ENCODE measurements at regions of chr14 and their contacts with region 1.

Region 1: DNA sequence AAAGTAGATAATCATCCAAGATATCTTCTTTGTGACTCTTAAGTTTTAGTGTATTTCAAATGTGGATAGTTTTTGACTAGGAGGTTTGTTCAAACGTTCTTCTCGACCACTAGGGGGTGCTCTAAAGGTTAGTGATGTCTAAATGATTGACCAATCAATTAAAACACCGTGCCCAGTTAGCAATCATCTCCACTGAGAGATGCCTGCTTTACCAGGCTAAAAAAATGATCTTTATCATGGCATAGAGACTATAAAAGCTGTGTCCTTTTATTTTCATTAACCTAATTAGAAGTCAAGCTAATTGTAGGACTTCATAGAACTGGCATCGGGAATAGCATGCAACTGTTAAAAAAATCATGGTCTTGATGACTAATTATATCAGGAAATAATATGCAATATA is 153.9 kb downstream of the PRKCH start:
- DNase-seq: no peak
- H3K4me3 Mint-ChIP-seq: peak overlapping the region; percentile 42
- H3K27ac Mint-ChIP-seq: peak overlapping the region; percentile 100
- H3K4me1 Mint-ChIP-seq: peaks cover 93% of the 10 kb centered on the region
- H3K27me3 Mint-ChIP-seq: peaks cover 1% of the 10 kb centered on the region

Region 2: GRCh38 chr14:61461808-61462275 is 13.5 kb before region 1 on chr14:
- CTCF ChIA-PET with region 1: interaction called, 17 read pairs
- POLR2A ChIA-PET with region 1: no interaction called
- intact Hi-C with region 1: no loop called
- DNase-seq: no peak
- H3K4me3 Mint-ChIP-seq: no peak overlapping the region
- H3K27ac Mint-ChIP-seq: peak overlapping the region; percentile 90
- H3K4me1 Mint-ChIP-seq: peaks cover 63% of the 10 kb centered on the region
- H3K27me3 Mint-ChIP-seq: no peaks in the 10 kb centered on the region

Region 3: GRCh38 chr14:61503167-61503801 is 28.0 kb after region 1 on chr14:
- CTCF ChIA-PET with region 1: interaction called, 32 read pairs
- POLR2A ChIA-PET with region 1: interaction called, 74 read pairs
- intact Hi-C with region 1: loop called (anchors 1 kb)
- DNase-seq: peak; percentile 90
- H3K4me3 Mint-ChIP-seq: peak overlapping the region; percentile 62
- H3K27ac Mint-ChIP-seq: peak overlapping the region; percentile 98
- H3K4me1 Mint-ChIP-seq: peaks cover 98% of the 10 kb centered on the region
- H3K27me3 Mint-ChIP-seq: no peaks in the 10 kb centered on the region

Region 4: DNA sequence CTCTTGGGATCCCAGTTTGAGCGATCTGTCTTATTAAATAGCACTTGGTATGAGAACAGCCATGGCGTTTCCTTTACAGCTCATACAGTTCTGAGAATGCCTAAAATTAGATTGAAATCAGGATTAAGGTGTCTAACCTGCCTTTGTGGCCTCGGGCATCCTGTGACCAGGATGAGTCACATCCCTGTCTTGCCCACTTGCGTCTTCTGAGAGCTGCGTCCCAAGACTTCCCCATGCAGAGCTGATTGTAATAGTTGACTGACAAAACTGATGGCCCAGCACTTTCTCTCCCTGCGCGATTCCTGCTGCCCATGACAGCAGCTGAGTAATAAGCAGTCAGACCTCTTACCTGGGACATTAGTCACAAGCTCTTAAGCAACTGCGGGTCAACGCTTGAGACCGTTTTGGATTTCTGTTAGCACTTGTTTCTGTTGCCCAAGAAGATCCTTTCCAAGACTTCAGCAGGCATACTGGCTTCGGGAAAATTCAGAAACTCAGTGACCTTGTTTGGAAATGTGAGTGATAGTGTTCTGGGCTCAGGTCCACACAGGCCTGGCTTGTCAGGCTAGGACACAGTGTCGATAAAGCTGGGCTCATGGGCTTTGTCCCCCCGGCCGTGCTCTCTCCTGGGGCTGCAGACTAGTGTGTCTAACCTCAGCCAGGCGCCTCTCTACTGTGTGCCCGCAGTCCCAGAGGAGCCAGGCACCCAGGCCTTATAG is 50.1 kb after region 1 on chr14:
- CTCF ChIA-PET with region 1: interaction called, 13 read pairs
- POLR2A ChIA-PET with region 1: interaction called, 42 read pairs
- intact Hi-C with region 1: loop called (anchors 1 kb)
- DNase-seq: peak; percentile 92
- H3K4me3 Mint-ChIP-seq: peak overlapping the region; percentile 63
- H3K27ac Mint-ChIP-seq: peak overlapping the region; percentile 91
- H3K4me1 Mint-ChIP-seq: peaks cover 88% of the 10 kb centered on the region
- H3K27me3 Mint-ChIP-seq: no peaks in the 10 kb centered on the region

Region 5: DNA sequence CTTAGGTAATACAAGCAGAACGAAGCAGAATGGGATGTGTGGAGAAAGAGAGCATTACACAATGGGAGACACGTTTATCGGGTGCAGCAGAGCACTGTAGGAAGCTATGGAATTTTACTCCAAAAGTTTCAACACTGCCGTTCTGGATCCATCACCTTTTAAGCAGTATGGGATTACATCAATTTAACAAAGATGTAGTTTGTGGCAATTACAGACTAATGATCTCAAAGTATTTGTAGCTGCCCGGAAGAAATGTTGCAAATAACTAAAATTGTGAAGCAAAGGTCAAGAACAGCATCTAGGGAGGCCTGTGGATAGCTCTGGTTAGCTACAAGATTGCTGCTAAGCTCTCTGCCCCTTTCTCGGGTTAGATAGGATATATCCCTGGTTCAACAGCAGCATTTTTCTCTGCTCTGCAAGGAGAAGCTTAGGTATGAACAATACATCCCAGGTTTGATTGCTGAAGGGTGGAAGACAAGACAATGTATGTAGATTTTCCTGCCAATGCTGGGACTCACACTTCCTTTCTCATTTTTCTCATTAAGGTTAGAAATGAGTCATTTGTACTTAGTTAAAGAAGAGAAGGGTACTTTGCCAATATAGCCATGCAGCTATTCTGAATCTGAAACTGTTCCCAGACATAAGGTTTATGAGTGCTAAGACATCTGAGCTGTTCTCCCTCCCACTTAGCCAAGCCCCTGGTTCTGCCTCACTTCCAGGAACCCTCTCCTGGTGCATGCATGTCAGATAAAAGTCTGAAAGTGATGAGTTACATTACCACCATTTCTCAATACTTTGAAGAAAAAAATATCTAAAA is 145.0 kb after region 1 on chr14:
- CTCF ChIA-PET with region 1: interaction called, 8 read pairs
- POLR2A ChIA-PET with region 1: interaction called, 3 read pairs
- intact Hi-C with region 1: loop called (anchors 1 kb)
- DNase-seq: peak; percentile 79
- H3K4me3 Mint-ChIP-seq: no peak overlapping the region
- H3K27ac Mint-ChIP-seq: peak overlapping the region; percentile 67
- H3K4me1 Mint-ChIP-seq: peaks cover 65% of the 10 kb centered on the region
- H3K27me3 Mint-ChIP-seq: no peaks in the 10 kb centered on the region

Region 6: DNA sequence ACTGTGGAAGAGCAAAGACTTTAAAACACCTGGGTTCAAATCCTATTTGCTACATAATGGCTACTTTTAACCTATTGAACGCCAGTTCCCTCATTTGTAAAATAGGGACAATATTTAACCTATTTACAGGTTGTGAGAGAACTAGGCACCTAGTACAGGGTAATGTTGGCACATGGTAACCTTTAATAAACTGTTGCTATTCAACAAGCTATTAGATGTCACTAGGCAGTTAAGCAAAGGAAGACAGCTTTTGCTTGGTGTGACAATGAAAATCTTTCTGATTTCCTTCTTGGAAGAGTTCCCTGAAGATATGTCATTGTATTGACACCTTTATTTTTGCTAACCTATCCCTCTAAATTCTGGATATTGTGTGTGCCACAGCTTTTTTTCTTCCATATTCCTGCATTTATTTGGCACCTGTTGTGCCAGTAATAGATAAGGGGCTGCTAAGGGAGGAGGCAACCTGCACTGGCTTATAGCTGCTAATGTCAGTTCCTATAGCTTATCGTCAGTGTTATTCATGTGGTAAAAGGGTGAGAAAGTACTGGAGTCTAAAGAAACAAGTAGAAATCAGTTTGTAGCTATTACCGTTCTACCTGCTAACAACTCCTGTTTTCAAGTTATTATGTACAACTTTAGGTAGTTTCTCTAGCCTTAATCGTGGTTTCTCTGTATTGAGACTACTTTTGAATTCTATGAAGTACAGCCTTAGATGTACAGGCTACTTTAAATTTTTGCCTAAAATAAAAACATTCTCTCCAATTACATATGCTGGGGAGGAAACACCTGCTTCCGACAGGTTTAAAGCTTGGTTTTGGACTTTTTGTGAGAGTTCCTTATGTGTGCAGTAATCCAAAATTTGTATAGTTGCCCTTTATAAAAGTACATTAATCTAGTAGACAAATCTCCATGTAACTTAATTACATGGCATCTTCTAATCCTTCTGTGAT is 244.3 kb after region 1 on chr14:
- CTCF ChIA-PET with region 1: interaction called, 4 read pairs
- POLR2A ChIA-PET with region 1: interaction called, 4 read pairs
- intact Hi-C with region 1: loop called (anchors 5 kb)
- DNase-seq: no peak
- H3K4me3 Mint-ChIP-seq: peak overlapping the region; percentile 23
- H3K27ac Mint-ChIP-seq: peak overlapping the region; percentile 68
- H3K4me1 Mint-ChIP-seq: peaks cover 72% of the 10 kb centered on the region
- H3K27me3 Mint-ChIP-seq: no peaks in the 10 kb centered on the region

Region 7: DNA sequence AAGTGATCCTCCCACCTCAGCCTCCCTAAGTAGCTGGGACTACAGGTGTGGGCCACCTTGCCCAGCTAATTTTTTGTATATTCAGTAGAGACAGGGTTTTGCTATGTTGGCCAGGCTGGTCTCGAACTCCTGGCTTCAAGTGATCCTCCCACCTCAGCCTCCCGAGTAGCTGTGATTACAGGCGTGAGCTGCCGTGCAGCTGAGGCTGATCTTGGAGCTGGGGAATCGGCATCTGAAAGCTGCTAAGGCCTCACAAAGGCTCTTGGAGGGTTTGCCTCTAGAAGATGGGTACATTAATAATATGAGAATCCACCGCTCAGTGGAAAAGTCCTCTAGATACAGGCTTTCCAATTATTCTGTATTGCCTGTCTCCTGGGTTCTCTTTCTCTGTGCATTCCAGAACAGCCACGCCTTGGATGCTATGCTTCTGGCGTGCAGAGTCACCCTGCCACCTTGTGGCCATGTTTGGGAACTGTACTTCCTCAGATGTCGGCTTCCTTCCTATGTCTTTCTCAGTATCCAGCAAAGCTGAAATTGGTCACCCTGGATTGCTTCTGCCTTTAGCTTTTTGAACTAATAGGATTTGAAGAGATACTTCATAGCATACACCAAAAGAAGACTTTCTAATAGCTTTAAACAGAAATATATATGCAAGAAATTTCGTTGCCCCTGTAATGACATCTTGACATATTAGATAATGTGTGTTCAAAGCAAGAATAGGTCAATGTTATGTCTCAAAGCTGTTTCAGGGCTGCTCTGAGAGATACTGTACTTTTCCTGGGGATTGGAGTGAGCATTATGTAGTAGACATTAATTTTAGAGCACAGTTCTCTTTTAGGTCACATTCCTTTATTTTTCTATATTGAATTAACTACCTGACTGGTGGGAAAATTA is 362.3 kb after region 1 on chr14:
- CTCF ChIA-PET with region 1: interaction called, 76 read pairs
- POLR2A ChIA-PET with region 1: no interaction called
- intact Hi-C with region 1: no loop called
- DNase-seq: peak; percentile 85
- H3K4me3 Mint-ChIP-seq: no peak overlapping the region
- H3K27ac Mint-ChIP-seq: no peak overlapping the region
- H3K4me1 Mint-ChIP-seq: peaks cover 4% of the 10 kb centered on the region
- H3K27me3 Mint-ChIP-seq: peaks cover 2% of the 10 kb centered on the region

Measured in activated CD4-positive, alpha-beta memory T cell treated with anti-CD3 and anti-CD28 coated beads for 36 hours (primary cell).